Left colon (tissue), 2 donors: ENCODE measurements at regions of chr20 and their contacts with region 1.

Region 1: GRCh38 chr20:37534401-37535157 is 6.9 kb upstream of the BLCAP start:
- DNase-seq: peak in 1 of 2 donors; percentile 34
- ATAC-seq: peak; percentile 80

Region 2: DNA sequence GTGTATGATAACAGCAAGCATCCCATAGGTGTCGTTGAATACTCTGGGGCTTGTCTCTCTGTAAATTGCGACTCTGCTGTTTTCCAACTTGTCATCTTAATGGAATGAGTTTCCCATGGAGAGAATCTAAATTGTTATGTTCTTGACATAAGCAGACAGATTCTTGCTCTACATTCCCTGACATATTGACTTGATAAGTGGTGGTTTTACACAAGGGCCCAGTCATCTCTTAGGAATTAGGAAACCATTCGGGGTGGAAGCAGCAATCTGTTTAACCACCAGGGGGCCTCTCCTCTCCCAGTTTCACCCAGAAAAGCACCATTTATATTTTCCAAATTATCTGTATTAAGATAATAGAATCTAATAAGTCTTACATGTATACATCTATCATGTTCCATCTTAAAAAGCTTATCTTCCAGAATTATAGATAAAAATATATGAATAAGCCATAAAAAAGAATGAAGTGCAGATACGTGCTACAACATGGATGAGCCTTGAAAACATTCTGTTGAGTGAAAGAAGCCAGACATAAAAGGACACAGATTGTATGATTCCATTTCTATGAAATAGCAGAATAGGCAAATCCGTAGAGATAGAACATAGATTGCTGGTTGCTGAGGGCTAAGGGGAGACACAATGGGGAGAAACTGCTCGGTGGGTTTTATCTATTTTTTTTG is 332.2 kb before region 1 on chr20:
- intact Hi-C with region 1: loop called in 1 of 2 experiments (anchors 5 kb)
- DNase-seq: peak in 1 of 2 donors; percentile 26
- ATAC-seq: peak; percentile 56

Region 3: GRCh38 chr20:37265152-37265551 is 269.4 kb before region 1 on chr20:
- intact Hi-C with region 1: loop called (anchors 5 kb)
- DNase-seq: no peak
- ATAC-seq: peak; percentile 36

Region 4: DNA sequence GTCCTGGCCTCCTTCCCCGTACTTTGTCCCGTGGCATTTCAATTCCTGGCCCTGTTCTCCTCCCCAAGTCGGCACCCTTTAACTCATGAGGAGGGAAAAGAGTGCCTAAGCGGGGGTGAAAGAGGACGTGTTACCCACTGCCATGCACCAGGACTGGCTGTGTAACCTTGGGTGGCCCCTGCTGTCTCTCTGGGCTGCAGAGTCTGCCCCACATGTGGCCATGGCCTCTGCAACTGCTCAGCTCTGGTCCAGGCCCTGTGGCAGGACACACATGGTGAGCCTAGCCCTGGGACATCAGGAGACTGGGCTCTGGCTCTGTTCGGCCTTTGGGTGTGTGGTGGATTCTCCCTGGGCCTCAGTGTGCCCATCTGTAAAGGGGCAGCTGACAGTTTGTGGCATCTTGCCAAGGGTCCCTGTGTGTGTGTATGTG is 130.1 kb before region 1 on chr20:
- intact Hi-C with region 1: loop called (anchors 5 to 10 kb)
- DNase-seq: no peak
- ATAC-seq: peak; percentile 3